ENCODE measurements at regions of chr1 and their contacts with region 1.

Region 1: GRCh38 chr1:93680757-93681550 is 683 bp downstream of the BCAR3 start:
- H3K4me3 Mint-ChIP-seq: peak overlapping the region; percentile 95
- H3K27ac Mint-ChIP-seq: peak overlapping the region; percentile 94
- H3K4me1 Mint-ChIP-seq: peaks cover 42% of the 10 kb centered on the region
- H3K27me3 Mint-ChIP-seq: peaks cover 4% of the 10 kb centered on the region

Region 2: GRCh38 chr1:93605812-93606512 is 75.0 kb before region 1 on chr1:
- intact Hi-C with region 1: no loop called
- H3K4me3 Mint-ChIP-seq: no peak overlapping the region
- H3K27ac Mint-ChIP-seq: peak overlapping the region; percentile 90
- H3K4me1 Mint-ChIP-seq: peaks cover 60% of the 10 kb centered on the region
- H3K27me3 Mint-ChIP-seq: no peaks in the 10 kb centered on the region

Region 3: GRCh38 chr1:93734999-93735398 is 54.0 kb after region 1 on chr1:
- intact Hi-C with region 1: loop called (anchors 5 kb)
- H3K4me3 Mint-ChIP-seq: no peak overlapping the region
- H3K27ac Mint-ChIP-seq: peak overlapping the region; percentile 39
- H3K4me1 Mint-ChIP-seq: peaks cover 49% of the 10 kb centered on the region
- H3K27me3 Mint-ChIP-seq: peaks cover 2% of the 10 kb centered on the region

Region 4: DNA sequence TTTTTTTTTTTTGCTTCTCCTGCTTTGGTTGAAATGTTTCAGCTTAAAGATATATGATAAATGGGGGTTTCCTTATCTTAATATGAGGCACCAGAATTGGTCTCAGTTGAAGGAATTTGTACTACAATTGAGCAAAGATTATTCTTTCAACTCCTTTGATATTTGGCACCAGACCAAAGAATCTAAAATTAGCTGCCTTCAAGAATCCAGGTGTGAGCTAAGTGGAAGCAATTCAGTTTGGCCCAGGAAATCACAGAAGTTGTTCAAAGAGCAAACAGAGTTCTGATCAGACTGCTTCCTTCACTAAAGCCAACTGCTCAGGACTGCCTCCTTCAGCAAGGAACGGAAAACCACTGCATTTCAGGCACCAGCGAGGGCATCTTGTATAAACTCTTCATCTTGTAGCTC is 68.9 kb after region 1 on chr1:
- intact Hi-C with region 1: loop called (anchors 5 kb)
- H3K4me3 Mint-ChIP-seq: no peak overlapping the region
- H3K27ac Mint-ChIP-seq: peak overlapping the region; percentile 82
- H3K4me1 Mint-ChIP-seq: peaks cover 48% of the 10 kb centered on the region
- H3K27me3 Mint-ChIP-seq: peaks cover 9% of the 10 kb centered on the region

Region 5: DNA sequence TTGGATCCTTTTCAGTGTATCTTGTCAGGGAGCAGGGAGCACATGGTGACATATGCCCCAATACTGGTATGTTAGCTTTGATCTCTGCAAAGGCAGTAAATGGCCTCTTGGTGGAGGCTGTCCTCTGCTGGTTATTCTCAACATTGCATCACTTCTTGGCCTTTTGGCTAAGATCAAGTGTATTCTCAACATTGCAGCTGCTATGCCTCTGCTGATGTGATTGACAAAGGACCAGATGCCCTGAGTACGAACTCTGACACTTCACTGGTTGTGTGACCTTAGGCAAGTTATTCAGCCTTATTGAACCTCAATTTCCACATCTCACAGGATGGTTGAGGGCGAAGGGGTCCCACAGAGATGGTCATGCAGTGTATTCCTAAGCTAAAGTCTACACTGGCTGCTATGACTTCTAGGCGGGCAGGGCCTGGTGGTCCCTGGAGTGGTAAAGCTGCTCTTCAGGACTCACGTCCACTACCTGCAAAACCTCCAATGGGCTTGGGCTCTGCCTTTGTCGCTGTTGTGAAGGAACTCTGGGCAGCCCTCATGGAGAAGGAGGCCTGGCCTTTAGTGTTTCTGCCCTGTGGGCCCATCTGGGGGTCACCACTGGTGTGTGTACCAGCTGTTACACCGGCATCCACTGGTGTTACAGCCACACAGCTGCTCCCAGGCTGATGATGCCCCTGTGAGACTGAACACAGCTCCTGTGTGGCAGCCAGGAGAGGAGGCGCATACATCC is 133.3 kb after region 1 on chr1:
- intact Hi-C with region 1: loop called (anchors 5 kb)
- H3K4me3 Mint-ChIP-seq: no peak overlapping the region
- H3K27ac Mint-ChIP-seq: no peak overlapping the region
- H3K4me1 Mint-ChIP-seq: peaks cover 52% of the 10 kb centered on the region
- H3K27me3 Mint-ChIP-seq: no peaks in the 10 kb centered on the region

Region 6: DNA sequence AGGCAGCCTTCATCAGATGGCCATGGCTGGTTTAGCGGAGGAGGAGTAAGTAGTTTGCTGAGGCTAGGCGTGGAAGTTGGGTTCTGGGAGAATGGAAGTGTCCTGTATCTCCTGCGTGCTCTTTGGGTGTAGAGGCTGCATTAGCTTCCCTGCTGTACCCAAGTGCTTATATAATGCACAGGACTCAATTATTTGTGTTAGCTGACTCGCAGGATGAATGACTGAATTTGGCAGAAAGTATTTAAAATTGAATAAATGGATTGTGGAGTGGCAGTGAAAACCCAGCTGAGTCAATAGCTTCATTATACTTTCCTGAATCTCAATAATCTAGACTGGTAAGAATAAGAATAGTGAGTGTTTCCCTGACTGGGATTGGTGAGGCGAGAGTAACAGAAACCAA is 184.3 kb after region 1 on chr1:
- intact Hi-C with region 1: no loop called
- H3K4me3 Mint-ChIP-seq: no peak overlapping the region
- H3K27ac Mint-ChIP-seq: no peak overlapping the region
- H3K4me1 Mint-ChIP-seq: no peaks in the 10 kb centered on the region
- H3K27me3 Mint-ChIP-seq: peaks cover 2% of the 10 kb centered on the region

Region 7: DNA sequence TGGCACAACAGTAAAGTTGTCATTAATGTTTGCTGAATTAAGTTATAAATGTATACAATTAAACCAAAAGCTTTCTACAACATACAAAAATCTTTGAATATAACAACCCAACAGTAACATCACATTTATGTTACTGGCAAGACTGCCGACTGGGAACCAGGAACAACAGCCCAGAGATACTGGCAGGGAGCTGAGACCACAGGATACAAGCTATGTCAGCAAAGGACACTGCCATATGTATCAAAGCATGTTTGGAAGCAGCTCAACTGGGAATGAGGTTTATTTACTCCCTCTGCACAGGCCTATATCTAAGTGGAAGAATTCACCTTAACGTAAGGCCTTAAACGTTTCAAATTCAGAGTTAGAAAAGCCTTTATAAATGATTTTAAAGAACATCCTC is 506.0 kb after region 1 on chr1:
- intact Hi-C with region 1: no loop called
- H3K4me3 Mint-ChIP-seq: no peak overlapping the region
- H3K27ac Mint-ChIP-seq: no peak overlapping the region
- H3K4me1 Mint-ChIP-seq: no peaks in the 10 kb centered on the region
- H3K27me3 Mint-ChIP-seq: peaks cover 8% of the 10 kb centered on the region

Measured in dendritic cell treated with granulocyte-macrophage colony-stimulating factor and Interleukin-4, amounts not matched to agents 40 ng/mL and 50 ng/mL, for 4 days (primary cell).